ENCODE measurements at regions of chr5 and their contacts with region 1.

Region 1: GRCh38 chr5:150560401-150561193 is 52.7 kb downstream of the NDST1 start:
- DNase-seq: peak; percentile 85
- H3K4me3 Mint-ChIP-seq: no peak overlapping the region
- H3K27ac Mint-ChIP-seq: no peak overlapping the region
- H3K4me1 Mint-ChIP-seq: no peaks in the 10 kb centered on the region
- H3K27me3 Mint-ChIP-seq: no peaks in the 10 kb centered on the region

Region 2: DNA sequence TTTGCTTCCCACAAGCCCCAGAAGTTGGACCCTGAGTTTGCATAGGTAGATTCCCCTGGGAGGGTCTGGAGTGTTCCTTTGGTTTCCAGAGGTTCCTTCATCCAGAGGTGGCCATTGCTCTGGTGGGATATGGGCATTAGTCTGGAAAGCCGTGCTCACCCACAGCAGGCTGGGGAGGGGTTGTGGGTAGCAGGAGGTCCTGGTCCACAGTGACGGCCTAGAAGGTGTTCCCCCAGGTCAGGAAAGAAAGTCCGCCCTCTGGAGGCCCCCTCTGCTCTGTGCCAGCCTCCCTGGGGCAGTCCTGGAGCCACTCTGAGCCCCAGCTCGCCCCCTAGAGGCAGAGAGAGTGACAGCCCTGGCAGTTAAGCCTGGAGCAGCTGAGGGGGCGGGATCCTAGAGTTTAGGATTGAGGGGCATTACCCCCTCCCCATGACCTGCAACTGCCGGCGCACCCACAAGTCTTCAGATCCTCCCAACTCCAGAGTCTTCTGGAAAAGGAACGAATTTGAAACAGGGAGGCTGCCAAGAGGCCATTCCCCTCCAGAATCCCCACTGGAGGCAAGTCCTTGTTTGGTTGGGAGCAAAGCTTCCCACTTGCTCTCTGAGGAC is 15.9 kb before region 1 on chr5:
- CTCF ChIA-PET with region 1: interaction called, 13 read pairs
- POLR2A ChIA-PET with region 1: no interaction called
- intact Hi-C with region 1: no loop called
- DNase-seq: peak; percentile 79
- H3K4me3 Mint-ChIP-seq: no peak overlapping the region
- H3K27ac Mint-ChIP-seq: no peak overlapping the region
- H3K4me1 Mint-ChIP-seq: no peaks in the 10 kb centered on the region
- H3K27me3 Mint-ChIP-seq: no peaks in the 10 kb centered on the region

Region 3: GRCh38 chr5:150656191-150657132 is 95.9 kb after region 1 on chr5:
- CTCF ChIA-PET with region 1: interaction called, 49 read pairs
- POLR2A ChIA-PET with region 1: no interaction called
- intact Hi-C with region 1: loop called (anchors 1 kb)
- DNase-seq: peak; percentile 80
- H3K4me3 Mint-ChIP-seq: peak overlapping the region; percentile 70
- H3K27ac Mint-ChIP-seq: no peak overlapping the region
- H3K4me1 Mint-ChIP-seq: peaks cover 2% of the 10 kb centered on the region
- H3K27me3 Mint-ChIP-seq: no peaks in the 10 kb centered on the region